Cardiac septum (tissue), 1 donor: ENCODE measurements at regions of chr7 and their contacts with region 1.

Region 1: DNA sequence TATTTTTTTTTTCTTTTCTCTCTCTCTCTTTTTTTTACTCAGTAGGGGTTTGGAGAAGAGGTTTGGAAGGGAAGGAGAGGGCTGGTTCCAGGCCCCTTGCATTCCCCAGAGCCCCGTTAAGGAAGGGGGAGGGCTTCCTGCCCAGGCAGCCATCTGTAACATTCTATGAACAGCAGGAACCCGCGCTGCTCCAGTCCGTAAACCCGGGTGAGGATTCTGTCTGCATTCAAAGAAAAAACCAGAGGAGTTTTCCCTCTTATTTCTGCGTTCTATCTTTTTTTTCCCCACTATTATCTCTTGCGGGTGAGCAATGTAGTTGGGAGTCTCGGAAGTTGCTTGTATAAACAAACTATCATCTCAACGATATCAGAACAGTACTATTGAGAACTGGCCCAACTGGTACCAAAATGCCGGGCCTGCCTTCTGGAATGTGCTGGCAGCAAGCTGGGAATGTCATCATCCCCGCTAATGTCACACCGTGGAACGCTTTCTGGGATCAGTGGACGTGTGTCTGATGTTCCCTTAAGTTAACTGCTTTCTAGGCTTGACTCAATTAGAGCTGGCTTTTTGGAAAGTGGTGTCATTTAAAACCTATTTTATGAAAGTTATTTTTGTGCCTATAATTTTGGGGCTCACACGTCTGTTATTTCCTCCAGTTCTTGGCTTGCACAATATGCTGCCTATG is 153.1 kb upstream of the MEOX2 start:
- DNase-seq: peak; percentile 85

Region 2: GRCh38 chr7:15686295-15686956 is 153.1 kb before region 1 on chr7 and contains the start of gene MEOX2:
- intact Hi-C with region 1: loop called (anchors 5 kb)
- DNase-seq: peak; percentile 88
- total RNA-seq, gene MEOX2: 6.9 TPM

Region 3: DNA sequence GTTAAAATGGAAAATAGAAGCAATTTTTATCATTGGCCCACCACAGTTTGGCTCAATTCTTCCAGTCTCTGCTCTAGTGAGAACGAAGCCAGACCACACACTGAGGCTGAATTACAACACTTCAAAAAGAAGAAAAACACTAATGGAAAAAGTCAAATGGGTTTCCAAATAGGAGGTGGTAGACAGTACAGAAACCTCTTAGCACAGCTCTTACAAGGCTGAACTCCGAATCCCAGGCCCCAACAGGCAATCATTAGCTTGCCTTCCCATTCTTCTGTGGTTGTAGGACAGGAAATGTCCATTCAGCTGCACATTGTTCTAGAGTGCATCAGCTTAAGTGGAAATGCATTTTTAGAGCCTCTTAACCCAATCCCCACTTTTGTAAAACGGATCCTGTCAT is 38.0 kb before region 1 on chr7:
- intact Hi-C with region 1: loop called (anchors 5 kb)
- DNase-seq: no peak

Region 4: GRCh38 chr7:15820319-15820718 is 19.2 kb before region 1 on chr7:
- intact Hi-C with region 1: loop called (anchors 1 kb)
- DNase-seq: no peak

Region 5: DNA sequence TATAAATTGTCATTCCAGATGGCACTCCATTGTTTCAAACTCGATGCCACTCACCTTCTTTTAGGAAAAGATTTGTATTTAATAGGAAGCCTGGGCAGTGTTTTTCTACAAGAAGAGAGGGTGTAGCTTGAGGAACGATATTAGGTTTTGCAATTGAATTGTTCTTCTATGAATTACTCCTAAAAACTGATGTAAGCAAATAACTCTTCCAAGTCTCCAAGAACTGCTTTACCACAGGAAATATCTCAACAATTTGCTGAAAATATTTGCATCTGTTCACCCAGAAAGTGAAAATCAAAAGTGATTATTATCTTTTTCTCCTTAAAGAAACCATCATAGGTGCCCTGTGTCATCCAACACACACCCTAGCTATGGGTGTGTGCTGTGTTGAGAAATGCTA is 108.2 kb after region 1 on chr7:
- intact Hi-C with region 1: no loop called
- DNase-seq: no peak